ENCODE measurements at regions of chr2 and their contacts with region 1.

Region 1: DNA sequence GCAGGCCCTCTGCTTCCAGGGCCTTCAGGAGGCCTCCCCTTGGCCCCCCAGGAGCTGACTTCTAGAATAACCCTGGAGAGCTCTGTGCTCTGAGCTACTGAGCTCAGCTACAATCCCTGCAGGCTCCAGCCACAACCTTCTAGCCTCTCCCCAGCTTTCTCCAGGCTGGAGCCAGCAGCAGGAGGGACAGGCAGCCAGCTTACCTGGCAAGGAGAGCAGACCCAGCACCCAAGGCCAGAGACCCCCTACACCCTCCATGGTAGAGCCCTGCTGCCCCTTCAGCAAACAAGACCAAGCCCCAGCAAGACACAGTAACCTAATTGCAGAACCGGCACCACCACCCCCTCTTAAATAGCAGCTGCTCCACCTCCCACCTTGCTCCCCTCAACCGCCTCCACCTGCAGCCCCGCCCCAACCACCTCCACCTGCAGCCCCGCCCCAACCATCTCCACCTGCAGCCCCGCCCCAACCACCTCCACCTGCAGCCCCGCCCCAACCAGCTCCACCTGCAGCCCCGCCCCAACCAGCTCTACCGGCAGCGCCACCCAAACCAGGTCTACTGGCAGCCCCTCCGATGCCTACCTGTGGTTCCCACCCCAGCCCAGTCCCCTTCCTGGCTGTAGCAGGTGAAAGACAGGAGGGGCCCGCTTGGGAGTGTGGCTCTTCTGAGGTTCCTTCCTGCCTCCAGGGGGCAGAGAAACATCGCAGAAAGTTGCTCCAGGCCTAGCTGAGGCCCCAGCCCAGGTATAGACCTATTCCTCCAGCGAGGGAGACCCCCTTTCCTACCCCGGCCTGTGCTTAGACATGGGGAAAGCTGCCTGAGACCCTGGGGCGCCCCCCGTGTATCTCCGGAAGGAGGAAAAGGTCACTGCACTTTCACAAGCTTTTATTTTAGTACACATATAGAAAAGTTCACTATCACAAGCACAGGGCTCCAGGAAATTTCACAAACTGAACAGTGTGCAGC is at the start of gene ASTL:
- DNase-seq: peak; percentile 52 to 54
- H3K4me3 ChIP-seq: no peak within 1 kb of the TSS
- H3K27ac ChIP-seq: no peak within 1 kb of the TSS
- H3K4me1 ChIP-seq: no peaks in the 10 kb centered on the region
- H3K27me3 ChIP-seq: no peaks in the 10 kb centered on the region
- CTCF ChIP-seq: peak in 5 of 6 experiments; percentile 26 to 61 (median 53)
- POLR2A ChIP-seq: no peak
- total RNA-seq, gene ASTL: not detected

Region 2: DNA sequence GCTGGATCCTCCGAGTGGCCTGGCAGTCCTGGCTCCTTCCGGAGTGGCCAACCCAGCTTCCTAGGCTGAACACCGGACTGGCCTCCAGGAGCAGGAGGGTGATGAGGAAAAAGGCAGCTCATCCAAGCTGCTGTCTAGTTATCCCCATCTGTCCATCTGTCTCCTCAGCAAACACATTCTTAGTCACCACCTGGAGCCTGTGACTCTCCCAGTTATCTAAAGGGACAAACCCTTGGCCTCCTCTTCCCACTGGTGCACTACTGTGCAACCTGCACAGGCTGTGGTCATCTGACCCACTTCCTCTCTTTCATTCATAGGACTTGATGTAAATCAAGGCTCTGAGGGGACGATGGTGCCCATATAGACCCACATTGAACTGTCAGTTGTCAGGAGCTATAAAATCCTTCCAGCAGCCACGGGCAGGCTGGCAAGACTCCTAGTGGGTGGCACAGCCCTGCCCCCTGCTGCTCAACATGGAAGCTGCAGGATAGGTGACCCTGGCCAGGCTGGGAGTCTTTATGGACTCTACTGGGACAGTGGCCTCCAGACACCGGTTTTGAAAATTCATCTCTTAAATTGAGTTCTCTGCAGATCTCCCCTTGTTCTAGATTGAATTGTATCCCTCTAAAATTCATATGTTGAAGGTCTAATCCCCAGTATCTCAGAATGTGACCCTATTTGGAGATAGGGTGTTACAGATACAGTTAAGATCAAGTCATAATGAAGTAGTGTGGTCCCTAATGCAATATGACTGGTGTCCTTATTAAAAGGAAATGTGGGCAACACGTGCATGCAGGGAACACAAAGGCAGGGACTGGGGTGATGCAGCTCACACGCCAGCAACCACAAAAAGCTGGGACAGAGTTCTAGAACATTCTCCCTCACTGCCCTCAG is 36.0 kb after region 1 on chr2:
- intact Hi-C with region 1: loop called (anchors 5 kb)
- DNase-seq: peak; percentile 74 to 84
- H3K4me3 ChIP-seq: no peak overlapping the region
- H3K27ac ChIP-seq: no peak overlapping the region
- H3K4me1 ChIP-seq: no peaks in the 10 kb centered on the region
- H3K27me3 ChIP-seq: no peaks in the 10 kb centered on the region
- CTCF ChIP-seq: peak; percentile 68 to 90 (median 80)
- POLR2A ChIP-seq: no peak

Region 3: GRCh38 chr2:96556441-96557330 is 418.2 kb after region 1 on chr2:
- intact Hi-C with region 1: no loop called
- DNase-seq: no peak
- H3K4me3 ChIP-seq: no peak overlapping the region
- H3K27ac ChIP-seq: no peak overlapping the region
- H3K4me1 ChIP-seq: no peaks in the 10 kb centered on the region
- H3K27me3 ChIP-seq: no peaks in the 10 kb centered on the region
- CTCF ChIP-seq: no peak
- POLR2A ChIP-seq: no peak

Region 4: DNA sequence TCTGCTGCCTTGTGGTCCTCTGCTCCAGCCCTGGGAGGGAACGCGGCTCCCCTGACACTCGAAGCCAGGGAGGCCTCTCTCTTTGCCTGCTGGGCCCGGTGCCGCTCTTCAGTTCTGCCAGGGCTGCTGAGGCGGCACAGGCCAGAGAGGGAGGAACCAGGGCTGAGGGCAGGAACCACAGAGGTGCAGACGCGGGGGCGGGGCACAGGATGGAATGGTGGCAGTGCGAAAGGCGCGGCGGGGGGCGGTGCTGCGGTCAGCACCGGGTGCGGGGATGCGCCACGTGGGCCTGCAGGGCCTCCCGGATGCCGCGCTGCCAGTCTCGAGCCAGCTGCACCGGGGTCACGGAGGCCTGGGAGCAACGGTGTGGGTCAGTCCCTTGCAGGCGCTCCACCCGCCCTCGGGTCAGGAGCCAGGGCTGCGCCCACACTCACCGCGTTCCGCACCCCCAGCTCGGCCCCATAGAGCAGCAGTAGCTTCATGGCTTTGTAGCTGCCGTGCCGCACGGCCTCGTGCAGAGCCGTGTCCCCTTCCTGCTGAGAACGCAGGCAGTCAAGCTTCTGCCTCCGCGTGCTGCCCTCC is 700.9 kb after region 1 on chr2:
- intact Hi-C with region 1: no loop called
- DNase-seq: peak; percentile 84 to 87
- H3K4me3 ChIP-seq: no peak overlapping the region
- H3K27ac ChIP-seq: no peak overlapping the region
- H3K4me1 ChIP-seq: peaks cover 0 to 9% of the 10 kb centered on the region in 2 donors
- H3K27me3 ChIP-seq: no peaks in the 10 kb centered on the region
- CTCF ChIP-seq: no peak
- POLR2A ChIP-seq: no peak

Measured in thyroid gland (tissue), 4 donors.